Activated CD4-positive, alpha-beta T cell treated with anti-CD3 and anti-CD28 coated beads, Interleukin-2, amount 10 ng/mL, durations not matched to agents 24 days and 14 days (primary cell): ENCODE measurements at regions of chr7 and their contacts with region 1.

Region 1: DNA sequence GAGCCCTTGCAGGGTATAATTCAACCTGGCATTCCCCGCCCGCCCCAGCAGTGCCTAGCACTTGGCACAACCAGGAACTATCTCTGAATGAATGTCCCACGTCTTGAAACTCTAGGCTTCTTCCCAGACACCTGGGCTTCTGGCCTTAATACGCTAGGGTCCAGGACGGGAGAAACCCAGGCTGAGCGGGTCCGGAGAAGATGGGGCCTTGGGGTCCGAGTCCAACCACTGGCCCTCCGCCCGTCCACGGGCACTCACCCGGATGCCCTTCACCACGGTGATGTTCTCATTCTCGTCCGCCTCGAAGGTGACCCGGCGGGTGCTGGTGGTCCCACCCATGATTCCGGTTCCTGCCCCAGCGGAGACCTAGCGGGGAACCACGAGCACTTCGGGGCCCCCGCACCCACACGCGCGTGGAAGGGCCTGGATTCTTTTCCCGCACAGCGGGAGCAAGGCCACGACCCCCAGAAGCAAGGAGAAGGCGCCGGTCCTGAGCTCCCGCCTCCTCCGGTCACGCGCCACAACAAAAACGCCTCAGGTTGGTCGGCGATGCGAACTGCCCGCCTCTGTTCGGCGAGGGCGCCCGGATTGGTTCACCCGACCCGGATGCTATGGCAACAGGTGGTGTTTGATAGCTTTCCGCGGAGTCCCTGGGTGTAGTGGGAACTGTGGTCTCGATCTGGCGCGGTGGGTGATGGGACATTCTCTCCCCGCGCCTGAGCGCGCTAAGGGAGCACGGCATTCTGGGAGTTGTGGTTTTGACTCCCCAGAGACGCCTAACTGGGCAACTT is at the start of gene CHCHD3:
- DNase-seq: peak; percentile 99
- H3K4me3 Mint-ChIP-seq: peak within 1 kb of the TSS; percentile 95
- H3K27ac Mint-ChIP-seq: peak within 1 kb of the TSS; percentile 87
- H3K4me1 Mint-ChIP-seq: peaks cover 18% of the 10 kb centered on the region
- H3K27me3 Mint-ChIP-seq: peaks cover 3% of the 10 kb centered on the region
- total RNA-seq, gene CHCHD3: 74.5 and 76.2 TPM in 2 replicates

Region 2: DNA sequence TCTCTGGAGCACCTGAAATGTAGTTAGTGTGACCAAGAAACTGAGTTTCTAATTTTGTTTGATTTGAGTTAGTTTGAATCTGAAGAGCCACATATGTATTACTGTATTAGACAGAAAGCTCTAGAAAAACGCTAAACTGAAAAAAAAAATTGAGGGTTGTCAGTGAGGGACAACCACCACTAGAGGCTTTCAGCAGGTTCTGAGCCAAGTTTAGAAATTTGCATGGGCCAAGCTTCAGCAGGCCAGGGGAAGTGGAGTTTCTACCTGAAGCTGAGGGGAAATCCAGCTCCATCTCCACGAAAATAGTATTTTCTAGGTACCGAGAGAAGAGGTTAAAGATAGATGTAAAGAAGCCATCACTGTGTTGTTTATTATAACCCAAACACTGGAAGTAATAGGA is 427.6 kb before region 1 on chr7:
- intact Hi-C with region 1: loop called (anchors 2 kb)
- DNase-seq: peak; percentile 73
- H3K4me3 Mint-ChIP-seq: peak overlapping the region; percentile 59
- H3K27ac Mint-ChIP-seq: peak overlapping the region; percentile 78
- H3K4me1 Mint-ChIP-seq: peaks cover 34% of the 10 kb centered on the region
- H3K27me3 Mint-ChIP-seq: no peaks in the 10 kb centered on the region

Region 3: DNA sequence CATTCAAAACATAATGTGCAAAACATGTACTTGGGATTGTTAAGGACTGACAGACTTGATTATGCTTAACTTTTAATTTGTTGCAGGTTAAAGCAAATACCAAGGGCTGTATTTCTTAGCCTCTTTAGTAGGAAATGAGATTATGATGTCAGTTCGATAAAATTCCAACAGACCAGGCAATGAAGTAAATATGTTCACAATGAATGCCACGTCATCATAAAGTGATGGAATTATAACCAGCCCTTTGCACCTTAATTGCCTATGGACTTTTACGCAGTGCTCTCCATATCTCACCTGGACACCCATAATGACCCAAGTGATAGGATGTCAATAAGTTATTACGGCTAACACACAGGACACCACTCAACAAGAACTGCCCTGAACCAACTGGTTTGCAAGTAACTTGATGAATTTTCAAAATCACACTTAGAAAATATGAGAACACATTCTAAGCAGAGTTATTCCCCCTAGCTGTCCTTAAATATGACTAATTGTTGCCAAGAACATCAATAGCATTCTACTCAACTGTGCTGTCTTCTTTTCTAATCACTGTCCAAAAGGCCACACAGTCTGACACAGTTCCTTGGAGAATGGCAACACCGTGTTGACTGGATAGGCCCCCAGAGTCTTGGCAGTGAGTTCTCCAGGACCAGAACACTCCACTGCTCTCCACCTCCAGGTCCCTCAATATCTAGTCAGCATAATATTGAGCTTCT is 114.9 kb before region 1 on chr7:
- intact Hi-C with region 1: no loop called
- DNase-seq: no peak
- H3K4me3 Mint-ChIP-seq: no peak overlapping the region
- H3K27ac Mint-ChIP-seq: no peak overlapping the region
- H3K4me1 Mint-ChIP-seq: peaks cover 2% of the 10 kb centered on the region
- H3K27me3 Mint-ChIP-seq: no peaks in the 10 kb centered on the region

Region 4: DNA sequence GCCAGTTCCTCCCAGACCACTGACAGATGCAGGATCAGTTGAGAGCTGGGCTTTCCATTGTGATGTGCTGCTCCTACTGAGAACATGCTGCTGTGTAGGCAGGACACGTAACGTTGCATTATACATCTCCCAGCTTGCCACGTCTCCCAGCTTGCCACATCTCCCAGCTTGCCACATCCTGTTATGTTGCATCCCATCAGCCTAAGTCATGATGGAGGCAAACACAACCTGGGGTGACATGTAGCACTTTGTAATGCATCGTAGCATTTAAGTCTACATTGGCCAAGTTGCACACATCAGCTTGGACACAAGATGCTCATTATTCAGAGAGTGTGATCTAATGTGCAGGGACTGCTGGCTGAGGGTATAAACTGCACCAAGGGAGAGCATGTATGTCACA is 73.4 kb after region 1 on chr7:
- intact Hi-C with region 1: no loop called
- DNase-seq: no peak
- H3K4me3 Mint-ChIP-seq: no peak overlapping the region
- H3K27ac Mint-ChIP-seq: no peak overlapping the region
- H3K4me1 Mint-ChIP-seq: no peaks in the 10 kb centered on the region
- H3K27me3 Mint-ChIP-seq: no peaks in the 10 kb centered on the region

Region 5: DNA sequence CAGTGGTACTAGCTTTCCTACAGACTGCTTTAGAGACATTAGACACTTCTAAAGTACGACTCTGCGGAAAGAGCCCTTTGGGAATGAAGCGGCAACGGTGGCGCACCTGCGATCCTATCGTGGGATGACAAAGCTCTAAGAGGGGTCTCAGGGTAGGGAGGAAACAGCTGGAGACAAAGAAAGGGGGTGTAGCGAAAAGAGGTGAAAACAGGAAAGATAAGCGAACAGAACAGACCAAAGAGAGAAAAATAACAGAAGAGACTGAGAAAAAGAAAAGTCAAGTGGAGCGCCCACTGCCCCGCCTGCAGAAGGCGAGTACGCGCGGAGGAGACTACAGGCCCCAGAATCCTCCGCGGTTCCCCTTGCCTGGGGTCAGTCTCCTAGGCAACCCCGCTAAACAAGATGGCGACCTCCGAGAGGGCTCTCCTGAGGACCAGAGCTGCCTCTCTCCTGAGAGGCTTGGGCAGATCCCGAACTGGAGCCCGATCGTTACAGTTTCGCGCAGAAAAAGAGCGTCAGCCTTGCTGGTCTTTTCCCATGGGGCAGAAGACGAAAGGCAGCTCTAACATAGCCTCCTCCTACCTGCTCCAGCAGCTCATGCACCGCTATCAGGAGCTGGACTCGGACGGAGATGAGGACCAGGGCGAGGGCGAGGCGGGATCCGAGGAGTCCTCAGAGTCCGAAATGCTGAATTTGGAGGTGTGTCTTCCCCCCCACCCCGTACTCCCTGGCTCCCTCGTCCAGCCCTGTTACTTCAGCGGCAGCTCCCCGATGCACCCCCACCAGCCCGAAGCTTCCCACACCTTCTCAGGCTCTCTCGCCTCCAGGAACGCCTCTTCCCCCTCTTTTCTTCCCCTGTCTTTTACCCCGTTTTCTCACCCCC is 1045.4 kb after region 1 on chr7 and contains the start of gene LRGUK:
- intact Hi-C with region 1: loop called (anchors 1 kb)
- DNase-seq: peak; percentile 94
- H3K4me3 Mint-ChIP-seq: peak within 1 kb of the TSS; percentile 90
- H3K27ac Mint-ChIP-seq: peak within 1 kb of the TSS; percentile 51
- H3K4me1 Mint-ChIP-seq: peaks cover 9% of the 10 kb centered on the region
- H3K27me3 Mint-ChIP-seq: peaks cover 34% of the 10 kb centered on the region
- total RNA-seq, gene LRGUK: 0.12 and 0.16 TPM in 2 replicates